ENCODE measurements at regions of chr12 and their contacts with region 1.

Region 1: GRCh38 chr12:27800819-27801218 is 20.8 kb upstream of the MANSC4 start:
- DNase-seq: no peak
- H3K4me3 ChIP-seq: no peak overlapping the region
- H3K27ac ChIP-seq: no peak overlapping the region
- H3K4me1 ChIP-seq: no peaks in the 10 kb centered on the region
- H3K27me3 ChIP-seq: no peaks in the 10 kb centered on the region
- CTCF ChIP-seq: no peak

Region 2: GRCh38 chr12:28998637-28999120 is 1197.9 kb after region 1 on chr12:
- CTCF ChIA-PET with region 1: no interaction called
- POLR2A ChIA-PET with region 1: no interaction called
- intact Hi-C with region 1: no loop called
- DNase-seq: peak in 1 of 2 experiments; percentile 35
- H3K4me3 ChIP-seq: no peak overlapping the region
- H3K27ac ChIP-seq: no peak overlapping the region
- H3K4me1 ChIP-seq: no peaks in the 10 kb centered on the region
- H3K27me3 ChIP-seq: no peaks in the 10 kb centered on the region
- CTCF ChIP-seq: peak; percentile 73

Region 3: GRCh38 chr12:29073628-29074239 is 1272.9 kb after region 1 on chr12:
- CTCF ChIA-PET with region 1: no interaction called
- POLR2A ChIA-PET with region 1: interaction called, 11 read pairs
- intact Hi-C with region 1: no loop called
- DNase-seq: peak; percentile 15 to 42
- H3K4me3 ChIP-seq: no peak overlapping the region
- H3K27ac ChIP-seq: no peak overlapping the region
- H3K4me1 ChIP-seq: no peaks in the 10 kb centered on the region
- H3K27me3 ChIP-seq: no peaks in the 10 kb centered on the region
- CTCF ChIP-seq: peak; percentile 86

Measured in PC-9 (cell line).